Ovary (tissue), 10 donors: ENCODE measurements at regions of chr6 and their contacts with region 1.

Region 1: GRCh38 chr6:155223646-155224451 is 40.0 kb upstream of the CLDN20 start:
- DNase-seq: no peak
- H3K4me3 ChIP-seq: no peak overlapping the region
- H3K27ac ChIP-seq: no peak overlapping the region
- H3K4me1 ChIP-seq: no peaks in the 10 kb centered on the region
- H3K27me3 ChIP-seq: no peaks in the 10 kb centered on the region
- CTCF ChIP-seq: no peak
- EP300 ChIP-seq: no peak
- POLR2A ChIP-seq: no peak

Region 2: DNA sequence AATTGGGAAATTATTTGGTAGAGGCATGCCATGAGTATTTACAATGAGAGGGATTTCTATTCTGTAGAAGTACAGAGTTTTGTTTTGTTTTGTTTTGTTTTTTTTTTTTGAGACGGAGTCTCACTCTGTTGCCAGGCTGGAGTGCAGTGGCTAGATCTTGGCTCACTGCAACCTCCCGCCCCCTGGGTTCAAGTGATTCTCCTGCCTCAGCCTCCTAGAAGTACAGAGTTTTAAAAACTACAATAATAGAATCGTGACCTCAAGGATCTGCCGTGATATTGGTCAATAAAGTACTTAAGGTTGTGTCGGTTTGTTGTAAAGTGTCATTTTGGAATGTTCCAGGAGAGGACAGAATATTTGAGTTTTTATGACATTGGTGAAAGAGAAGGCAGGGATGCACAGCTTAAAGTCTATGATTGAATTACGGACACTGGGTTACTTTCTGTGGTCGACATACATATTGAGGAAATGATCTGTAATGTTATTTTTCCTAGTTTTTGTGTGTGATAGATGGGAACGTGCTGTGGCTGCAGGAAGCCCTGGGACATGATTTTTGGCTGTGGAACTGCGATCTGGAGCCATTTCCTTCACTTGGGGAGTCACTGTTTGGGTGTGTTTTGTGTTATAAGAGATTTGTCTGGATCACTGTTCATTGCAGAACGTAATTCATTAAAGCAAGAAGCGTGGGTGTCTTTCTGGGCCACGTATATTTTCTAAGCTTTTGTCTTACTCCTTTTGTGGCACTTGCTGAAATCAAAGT is 169.2 kb before region 1 on chr6:
- intact Hi-C with region 1: loop called in 1 of 4 experiments (anchors 5 kb)
- DNase-seq: no peak
- H3K4me3 ChIP-seq: no peak overlapping the region
- H3K27ac ChIP-seq: no peak overlapping the region
- H3K4me1 ChIP-seq: no peaks in the 10 kb centered on the region
- H3K27me3 ChIP-seq: no peaks in the 10 kb centered on the region
- CTCF ChIP-seq: no peak
- EP300 ChIP-seq: no peak
- POLR2A ChIP-seq: no peak

Region 3: DNA sequence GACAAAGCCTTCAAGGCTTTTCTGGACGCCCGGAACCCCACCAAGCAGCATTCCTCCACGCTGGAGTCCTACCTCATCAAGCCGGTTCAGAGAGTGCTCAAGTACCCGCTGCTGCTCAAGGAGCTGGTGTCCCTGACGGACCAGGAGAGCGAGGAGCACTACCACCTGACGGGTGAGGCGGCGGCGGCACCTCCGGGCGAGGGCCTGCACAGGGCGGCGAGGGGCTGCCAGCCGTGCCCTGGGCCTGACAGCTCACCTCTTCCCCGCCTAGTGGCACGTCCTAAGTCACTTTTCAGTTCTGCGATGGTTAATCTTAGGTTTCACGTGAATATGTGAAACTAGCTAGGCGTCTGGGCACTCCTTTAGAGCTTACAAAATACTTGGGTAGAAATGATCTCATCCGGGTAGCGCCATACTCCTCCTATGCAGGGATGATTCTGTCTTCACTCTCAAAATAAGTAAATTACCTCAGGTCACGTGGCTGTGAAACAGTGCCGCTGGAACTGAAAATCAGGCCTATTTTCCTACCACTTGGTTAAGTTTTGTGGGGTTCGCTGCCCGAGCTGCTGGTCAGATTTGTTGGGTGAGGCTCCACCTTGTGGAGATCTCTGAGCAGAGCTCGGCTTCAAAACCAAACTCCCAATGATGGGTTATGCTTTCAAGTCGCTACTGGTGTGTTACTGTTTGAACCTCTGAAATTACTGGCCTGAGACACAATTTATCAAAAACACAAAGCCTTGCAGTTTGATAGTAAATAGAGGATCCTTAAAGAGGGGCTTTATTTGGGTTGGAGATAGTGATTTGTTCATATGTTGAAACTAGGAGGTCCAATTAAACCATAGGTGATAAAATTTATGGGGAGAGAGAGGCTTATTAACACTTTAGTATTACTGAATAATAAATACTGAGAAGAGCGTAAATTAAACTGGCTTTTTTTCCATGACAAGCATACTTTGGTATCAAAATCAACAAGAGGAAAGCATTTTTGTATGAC is 24.5 kb after region 1 on chr6:
- intact Hi-C with region 1: no loop called
- DNase-seq: peak; percentile 39 to 65 (median 58)
- H3K4me3 ChIP-seq: no peak overlapping the region
- H3K27ac ChIP-seq: peak overlapping the region in 1 of 2 donors; percentile 47
- H3K4me1 ChIP-seq: peaks cover 2% of the 10 kb centered on the region
- H3K27me3 ChIP-seq: no peaks in the 10 kb centered on the region
- CTCF ChIP-seq: peak; percentile 55 to 64 (median 59)
- EP300 ChIP-seq: no peak
- POLR2A ChIP-seq: no peak